ENCODE measurements at regions of chr11 and their contacts with region 1.

Region 1: GRCh38 chr11:66970808-66971442 is 4.2 kb upstream of the C11orf86 start:
- DNase-seq: peak; percentile 89
- ATAC-seq: peak; percentile 88
- H3K4me3 ChIP-seq: peak overlapping the region in 1 of 2 experiments; percentile 5; a peak in 2 of 4 replicates
- H3K27ac ChIP-seq: peak overlapping the region; percentile 55
- H3K4me1 ChIP-seq: peaks cover 10 to 53% of the 10 kb centered on the region in 2 experiments
- H3K27me3 ChIP-seq: no peaks in the 10 kb centered on the region
- CTCF ChIP-seq: no peak
- POLR2A ChIP-seq: no peak
- RAD21 ChIP-seq: peak; percentile 30; the same call in 1 of the 2 replicates

Region 2: DNA sequence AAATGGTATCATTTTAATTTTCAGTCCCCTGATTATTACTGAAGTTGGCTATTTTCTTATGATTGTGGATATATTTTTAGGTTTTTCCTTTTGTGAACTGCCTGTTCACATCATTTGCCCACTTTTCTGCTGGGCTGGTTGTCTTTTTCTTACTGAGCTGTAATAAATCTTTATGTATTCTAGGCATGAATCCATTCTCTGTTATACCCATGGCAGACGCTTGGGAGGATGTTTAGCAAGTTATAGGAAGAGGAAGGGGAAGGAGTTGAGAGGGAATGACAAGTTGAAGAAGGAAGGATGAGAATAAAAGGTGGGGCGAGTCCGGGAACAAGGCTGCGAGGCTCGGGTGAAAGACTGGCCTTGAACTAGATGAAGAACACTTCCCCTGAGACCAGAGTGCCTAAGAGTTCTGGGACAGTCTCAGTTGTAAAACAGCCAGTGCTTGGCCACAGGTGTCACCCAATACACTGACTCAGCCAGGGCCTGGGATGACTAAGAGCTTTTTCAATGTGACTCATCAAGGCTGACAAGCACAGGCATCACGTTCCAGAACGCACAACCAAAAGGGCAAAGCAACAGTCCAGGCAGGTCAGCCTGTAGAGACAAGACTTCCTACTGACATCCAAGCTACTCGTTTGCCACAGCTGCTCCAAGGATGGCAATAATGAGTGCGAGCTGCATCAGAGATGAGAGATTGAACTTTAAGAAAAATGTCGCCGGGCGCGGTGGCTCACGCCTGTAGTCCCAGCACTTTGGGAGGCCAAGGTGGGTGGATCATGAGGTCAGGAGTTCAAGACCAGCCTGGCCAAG is 78.9 kb before region 1 on chr11:
- CTCF ChIA-PET with region 1: no interaction called
- POLR2A ChIA-PET with region 1: no interaction called
- RAD21 ChIA-PET with region 1: interaction called in 1 of 2 experiments, 6 read pairs
- intact Hi-C with region 1: loop called (anchors 5 kb)
- DNase-seq: peak; percentile 96
- ATAC-seq: peak; percentile 97
- H3K4me3 ChIP-seq: peak overlapping the region in 1 of 2 experiments; percentile 32; a peak in 2 of 4 replicates
- H3K27ac ChIP-seq: peak overlapping the region; percentile 64
- H3K4me1 ChIP-seq: peaks cover 39 to 62% of the 10 kb centered on the region in 2 experiments
- H3K27me3 ChIP-seq: no peaks in the 10 kb centered on the region
- CTCF ChIP-seq: 0 out of 6 replicates have a peak, but pooled peaks of 1 of the 3 experiments have one; percentile 1
- POLR2A ChIP-seq: no peak
- RAD21 ChIP-seq: no peak